ENCODE measurements at regions of chr3 and their contacts with region 1.

Region 1: GRCh38 chr3:104952146-104952972 is 414.4 kb upstream of the ALCAM start:
- DNase-seq: peak in 1 of 2 experiments; percentile 35
- H3K4me3 ChIP-seq: no peak overlapping the region
- H3K27ac ChIP-seq: no peak overlapping the region
- H3K4me1 ChIP-seq: no peaks in the 10 kb centered on the region
- H3K27me3 ChIP-seq: no peaks in the 10 kb centered on the region
- CTCF ChIP-seq: no peak

Region 2: DNA sequence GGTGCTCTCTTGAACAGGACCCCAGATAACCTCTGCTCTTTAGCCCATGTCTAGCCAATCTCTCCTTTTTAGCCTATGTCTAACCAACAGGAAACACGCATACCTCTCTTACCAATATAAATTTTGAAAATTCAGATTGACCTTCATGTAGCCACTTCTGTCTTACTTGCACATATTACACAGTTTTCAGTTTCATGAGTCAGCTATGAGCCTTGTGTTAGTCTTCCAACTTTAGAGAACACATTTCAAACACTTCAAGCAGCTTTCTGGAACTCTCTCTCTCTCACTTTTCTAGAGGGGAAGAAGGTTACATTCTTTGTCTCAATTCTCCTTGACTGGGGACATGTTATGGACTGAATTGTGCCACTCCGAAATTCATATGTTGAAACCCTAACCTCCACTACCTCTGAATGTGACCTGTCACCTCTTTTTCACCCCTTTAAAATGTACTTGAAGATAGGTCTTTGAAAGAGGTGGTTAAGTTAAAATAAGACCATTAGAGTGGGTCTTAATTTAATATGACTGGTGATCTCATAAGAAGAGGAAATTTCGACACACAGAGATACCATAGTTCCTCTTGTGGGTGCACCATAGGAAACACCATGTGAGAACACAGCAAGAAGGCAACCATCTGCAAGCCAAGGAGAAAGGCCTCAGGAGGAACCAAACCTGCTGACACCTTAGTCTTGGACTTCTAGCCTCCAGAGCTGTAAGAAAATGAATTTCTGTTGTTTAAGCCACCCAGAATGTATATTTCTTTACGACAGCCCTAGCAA is 66.0 kb before region 1 on chr3:
- CTCF ChIA-PET with region 1: no interaction called
- POLR2A ChIA-PET with region 1: no interaction called
- intact Hi-C with region 1: no loop called
- DNase-seq: no peak
- H3K4me3 ChIP-seq: no peak overlapping the region
- H3K27ac ChIP-seq: no peak overlapping the region
- H3K4me1 ChIP-seq: no peaks in the 10 kb centered on the region
- H3K27me3 ChIP-seq: no peaks in the 10 kb centered on the region
- CTCF ChIP-seq: no peak

Region 3: GRCh38 chr3:105158286-105158685 is 205.9 kb after region 1 on chr3:
- CTCF ChIA-PET with region 1: no interaction called
- POLR2A ChIA-PET with region 1: no interaction called
- intact Hi-C with region 1: loop called (anchors 10 kb)
- DNase-seq: no peak
- H3K4me3 ChIP-seq: no peak overlapping the region
- H3K27ac ChIP-seq: no peak overlapping the region
- H3K4me1 ChIP-seq: no peaks in the 10 kb centered on the region; the same call in 1 of the 2 replicates
- H3K27me3 ChIP-seq: no peaks in the 10 kb centered on the region
- CTCF ChIP-seq: no peak

Region 4: DNA sequence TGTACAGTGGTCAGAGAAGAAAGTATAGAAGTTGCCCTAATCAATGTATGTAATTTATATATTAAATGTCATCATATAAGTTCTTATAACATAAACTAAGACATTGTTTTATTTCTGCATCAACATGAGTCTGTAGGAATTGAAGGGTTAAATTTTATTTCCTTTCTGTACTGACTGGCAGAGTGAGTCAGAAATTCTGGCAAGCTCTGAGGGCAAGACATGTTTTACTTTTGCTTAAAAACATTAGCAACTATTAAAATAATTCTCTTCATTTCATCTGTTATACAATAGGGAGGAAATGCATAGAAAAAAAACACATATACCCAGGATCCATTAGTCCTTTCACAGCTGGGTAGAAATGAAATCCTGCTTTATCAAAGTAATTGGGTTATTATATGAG is 242.9 kb after region 1 on chr3:
- CTCF ChIA-PET with region 1: no interaction called
- POLR2A ChIA-PET with region 1: no interaction called
- intact Hi-C with region 1: no loop called
- DNase-seq: no peak
- H3K4me3 ChIP-seq: no peak overlapping the region
- H3K27ac ChIP-seq: no peak overlapping the region
- H3K4me1 ChIP-seq: no peaks in the 10 kb centered on the region
- H3K27me3 ChIP-seq: no peaks in the 10 kb centered on the region
- CTCF ChIP-seq: no peak

Region 5: GRCh38 chr3:105564546-105565288 is 612.4 kb after region 1 on chr3:
- CTCF ChIA-PET with region 1: interaction called, 15 read pairs
- POLR2A ChIA-PET with region 1: no interaction called
- intact Hi-C with region 1: no loop called
- DNase-seq: no peak
- H3K4me3 ChIP-seq: no peak overlapping the region
- H3K27ac ChIP-seq: no peak overlapping the region
- H3K4me1 ChIP-seq: no peaks in the 10 kb centered on the region
- H3K27me3 ChIP-seq: no peaks in the 10 kb centered on the region
- CTCF ChIP-seq: no peak

Region 6: DNA sequence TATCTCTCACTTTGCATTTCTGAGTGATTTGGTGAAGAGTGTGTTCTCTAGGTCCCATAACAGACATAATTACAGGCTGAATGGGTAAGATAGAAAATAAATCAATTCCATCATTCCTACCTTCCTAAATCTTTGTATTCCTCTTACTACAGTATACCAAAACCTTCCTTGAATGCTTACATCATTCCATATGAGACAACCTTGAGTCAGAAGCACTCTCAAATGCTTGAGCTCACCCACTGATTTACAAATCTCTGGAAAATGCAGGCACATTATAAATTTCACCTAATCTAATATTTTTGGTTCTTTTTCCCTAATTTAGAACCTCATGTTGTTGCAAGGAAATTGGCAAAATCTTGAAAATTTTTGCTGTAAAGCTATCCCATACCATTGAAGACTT is 677.4 kb after region 1 on chr3:
- CTCF ChIA-PET with region 1: no interaction called
- POLR2A ChIA-PET with region 1: no interaction called
- intact Hi-C with region 1: no loop called
- DNase-seq: no peak
- H3K4me3 ChIP-seq: no peak overlapping the region
- H3K27ac ChIP-seq: no peak overlapping the region
- H3K4me1 ChIP-seq: no peaks in the 10 kb centered on the region
- H3K27me3 ChIP-seq: no peaks in the 10 kb centered on the region
- CTCF ChIP-seq: no peak

Measured in PC-9 (cell line).